PC-3 (cell line): ENCODE measurements at regions of chr9 and their contacts with region 1.

Region 1: DNA sequence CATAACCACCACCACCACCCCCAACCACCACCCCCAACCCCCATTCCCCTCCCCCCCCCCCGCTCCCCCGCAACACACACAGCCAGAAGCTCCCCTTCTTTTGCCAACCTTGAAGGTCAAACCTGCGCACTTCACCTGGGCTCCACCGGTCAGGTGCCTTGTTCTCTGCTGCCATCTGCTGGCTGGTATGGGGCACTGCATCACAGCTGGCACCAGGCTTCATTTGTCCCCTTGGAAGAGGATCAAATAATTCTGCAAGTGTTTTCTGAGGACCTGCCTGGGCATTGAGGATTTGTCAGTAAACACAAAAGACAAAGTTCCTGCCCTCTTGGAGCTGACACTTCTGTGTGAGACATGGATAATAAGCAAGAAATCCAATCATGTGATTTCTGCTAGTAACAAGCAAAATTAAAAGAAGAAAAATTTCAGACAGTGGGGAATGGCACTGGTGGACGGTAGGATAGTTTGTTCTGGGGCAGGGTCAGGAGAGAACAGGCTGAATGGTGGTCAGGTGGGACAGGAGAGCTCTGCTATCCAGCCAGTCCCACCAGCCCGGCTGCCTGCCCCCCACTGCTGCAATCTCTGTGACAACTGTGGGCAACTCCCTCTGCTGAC is 55.6 kb upstream of the LMX1B start:
- DNase-seq: peak; percentile 70
- ATAC-seq: peak; percentile 75
- H3K4me3 ChIP-seq: no peak overlapping the region
- H3K27ac ChIP-seq: no peak overlapping the region
- H3K4me1 ChIP-seq: no peaks in the 10 kb centered on the region
- H3K27me3 ChIP-seq: peaks cover 15% of the 10 kb centered on the region
- CTCF ChIP-seq: peak; percentile 81

Region 2: GRCh38 chr9:126203126-126203712 is 354.9 kb before region 1 on chr9:
- CTCF ChIA-PET with region 1: no interaction called
- POLR2A ChIA-PET with region 1: no interaction called
- intact Hi-C with region 1: no loop called
- DNase-seq: no peak
- ATAC-seq: no peak
- H3K4me3 ChIP-seq: no peak overlapping the region
- H3K27ac ChIP-seq: no peak overlapping the region
- H3K4me1 ChIP-seq: no peaks in the 10 kb centered on the region
- H3K27me3 ChIP-seq: peaks cover 6% of the 10 kb centered on the region; the same call in 1 of the 2 replicates
- CTCF ChIP-seq: peak; percentile 41

Region 3: DNA sequence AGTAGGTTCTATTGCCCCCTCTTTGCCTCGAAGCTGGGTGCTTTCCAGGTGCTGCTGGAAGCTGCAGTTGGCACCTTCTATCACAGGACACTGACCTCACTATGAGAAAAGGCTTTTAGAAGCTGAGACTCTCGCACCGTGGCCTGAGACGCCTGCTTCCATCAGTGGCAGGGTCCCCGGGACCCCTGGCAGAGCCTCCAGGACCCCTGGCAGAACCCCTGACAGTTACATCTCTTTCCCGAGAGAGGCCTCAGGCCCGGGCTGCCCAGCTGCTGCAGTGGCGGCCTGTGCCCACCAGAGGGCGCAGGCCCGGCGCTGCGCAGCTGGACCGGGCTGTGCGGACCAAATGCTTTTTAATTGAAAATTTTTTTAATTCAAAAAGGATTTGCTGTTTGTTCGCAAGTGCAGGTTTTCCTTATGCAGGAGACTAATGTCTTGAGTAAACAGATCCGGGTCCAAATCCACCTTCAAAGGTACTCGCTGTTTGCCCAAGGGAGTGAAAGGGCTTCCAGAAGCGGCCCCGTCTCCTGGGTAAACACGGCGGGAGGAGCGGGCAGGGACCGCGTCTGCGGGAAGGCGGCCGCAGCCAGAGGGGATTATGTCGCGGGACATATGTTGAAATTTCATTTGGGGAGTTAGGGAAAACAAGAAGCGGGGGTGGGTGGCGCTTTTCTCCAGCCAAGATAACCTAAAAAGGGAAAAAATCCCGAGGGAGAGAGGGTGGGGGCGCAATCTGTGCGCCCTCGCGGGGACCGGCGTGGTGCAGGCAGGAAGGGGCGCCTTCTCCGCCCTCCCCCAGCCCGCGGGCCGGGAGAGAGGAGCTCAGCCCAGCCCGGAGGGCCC is 58.9 kb before region 1 on chr9:
- CTCF ChIA-PET with region 1: interaction called, 4 read pairs
- POLR2A ChIA-PET with region 1: no interaction called
- intact Hi-C with region 1: loop called (anchors 1 kb)
- DNase-seq: peak; percentile 57
- ATAC-seq: peak; percentile 78
- H3K4me3 ChIP-seq: peak overlapping the region; percentile 68
- H3K27ac ChIP-seq: no peak overlapping the region
- H3K4me1 ChIP-seq: no peaks in the 10 kb centered on the region
- H3K27me3 ChIP-seq: no peaks in the 10 kb centered on the region
- CTCF ChIP-seq: peak; percentile 84

Region 4: GRCh38 chr9:127224178-127224882 is 666.2 kb after region 1 on chr9:
- CTCF ChIA-PET with region 1: interaction called, 15 read pairs
- POLR2A ChIA-PET with region 1: no interaction called
- intact Hi-C with region 1: no loop called
- DNase-seq: peak; percentile 89
- ATAC-seq: peak; percentile 80
- H3K4me3 ChIP-seq: peak overlapping the region; percentile 73
- H3K27ac ChIP-seq: 0 out of 2 replicates have a peak overlapping the region, but pooled peaks have one; percentile 34
- H3K4me1 ChIP-seq: peaks cover 6% of the 10 kb centered on the region; the same call in 1 of the 2 replicates
- H3K27me3 ChIP-seq: no peaks in the 10 kb centered on the region
- CTCF ChIP-seq: no peak